ENCODE measurements at regions of chr18 and their contacts with region 1.

Region 1: GRCh38 chr18:45317948-45318640 is 297.2 kb upstream of the SLC14A2 start:
- DNase-seq: no peak
- ATAC-seq: no peak
- H3K4me3 ChIP-seq: no peak overlapping the region
- H3K27ac ChIP-seq: no peak overlapping the region
- H3K4me1 ChIP-seq: peaks cover 28% of the 10 kb centered on the region
- H3K27me3 ChIP-seq: no peaks in the 10 kb centered on the region
- CTCF ChIP-seq: no peak

Region 2: DNA sequence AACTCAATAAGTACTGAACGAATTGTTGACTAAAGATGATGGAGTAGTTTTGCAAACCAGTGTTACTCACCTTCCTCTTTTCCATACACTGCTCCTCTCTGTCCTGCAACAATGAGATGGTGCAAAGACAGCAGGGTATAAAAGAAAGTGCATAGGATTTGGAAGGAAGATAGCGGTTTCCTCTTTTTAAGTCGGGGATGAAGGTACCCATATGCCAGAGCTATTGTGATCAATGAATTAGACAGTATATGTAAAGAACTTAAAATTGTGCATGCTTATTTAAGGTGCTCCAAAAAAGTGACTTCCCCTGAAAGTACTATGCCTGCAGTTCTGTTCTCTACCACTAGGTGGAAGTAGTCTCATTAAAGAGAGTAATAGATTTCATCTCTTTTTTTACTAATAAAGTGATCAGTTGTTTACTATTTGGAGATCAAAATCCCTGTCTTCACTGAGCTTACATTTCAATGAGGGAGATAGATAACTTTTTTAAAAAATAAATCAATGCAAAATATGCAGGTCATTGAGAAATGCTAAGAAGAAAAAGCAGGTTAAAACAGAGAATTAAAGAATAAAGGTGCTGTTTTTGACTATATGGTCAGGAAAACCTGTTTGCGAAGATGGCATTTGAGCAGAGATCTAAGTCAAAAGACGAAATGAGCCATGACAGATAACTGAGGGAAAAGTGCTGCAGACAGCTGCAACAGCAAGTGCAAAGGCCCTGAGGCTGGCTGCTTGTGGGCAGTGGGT is 42.6 kb before region 1 on chr18:
- intact Hi-C with region 1: loop called in 1 of 2 experiments (anchors 5 kb)
- DNase-seq: no peak
- ATAC-seq: no peak
- H3K4me3 ChIP-seq: no peak overlapping the region
- H3K27ac ChIP-seq: no peak overlapping the region
- H3K4me1 ChIP-seq: no peaks in the 10 kb centered on the region
- H3K27me3 ChIP-seq: no peaks in the 10 kb centered on the region
- CTCF ChIP-seq: peak; percentile 84